Activated CD4-positive, alpha-beta memory T cell treated with anti-CD3 and anti-CD28 coated beads for 36 hours (primary cell): ENCODE measurements at regions of chr6 and their contacts with region 1.

Region 1: DNA sequence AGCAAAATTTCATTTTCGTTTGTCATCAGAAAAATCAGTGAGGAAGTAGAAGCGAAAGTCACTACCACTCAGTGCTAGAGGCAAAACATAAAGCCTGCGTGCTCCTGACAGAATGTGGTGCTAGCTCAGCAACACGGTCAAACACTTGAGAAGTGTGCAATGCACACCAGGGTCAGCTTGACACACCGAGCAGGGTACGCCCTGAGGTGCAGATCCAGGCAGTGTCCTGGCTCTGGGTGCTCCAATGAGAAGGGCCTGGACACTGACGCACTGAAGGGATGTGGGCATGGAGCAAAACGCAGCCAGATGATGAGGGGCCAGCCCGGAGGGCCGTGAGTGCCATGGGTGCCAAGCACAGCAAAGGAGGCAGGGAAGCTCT is 5.9 kb downstream of the RNASET2 start:
- DNase-seq: peak; percentile 59
- H3K4me3 Mint-ChIP-seq: peak overlapping the region; percentile 79
- H3K27ac Mint-ChIP-seq: peak overlapping the region; percentile 99
- H3K4me1 Mint-ChIP-seq: peaks cover 63% of the 10 kb centered on the region
- H3K27me3 Mint-ChIP-seq: no peaks in the 10 kb centered on the region

Region 2: GRCh38 chr6:166775180-166776081 is 175.0 kb before region 1 on chr6:
- CTCF ChIA-PET with region 1: interaction called, 31 read pairs
- POLR2A ChIA-PET with region 1: no interaction called
- intact Hi-C with region 1: no loop called
- DNase-seq: peak; percentile 69
- H3K4me3 Mint-ChIP-seq: no peak overlapping the region
- H3K27ac Mint-ChIP-seq: no peak overlapping the region
- H3K4me1 Mint-ChIP-seq: no peaks in the 10 kb centered on the region
- H3K27me3 Mint-ChIP-seq: no peaks in the 10 kb centered on the region

Region 3: GRCh38 chr6:166830185-166830890 is 120.1 kb before region 1 on chr6:
- CTCF ChIA-PET with region 1: interaction called, 9 read pairs
- POLR2A ChIA-PET with region 1: interaction called, 4 read pairs
- intact Hi-C with region 1: loop called (anchors 1 kb)
- DNase-seq: peak; percentile 68
- H3K4me3 Mint-ChIP-seq: no peak overlapping the region
- H3K27ac Mint-ChIP-seq: peak overlapping the region; percentile 58
- H3K4me1 Mint-ChIP-seq: peaks cover 17% of the 10 kb centered on the region
- H3K27me3 Mint-ChIP-seq: no peaks in the 10 kb centered on the region

Region 4: DNA sequence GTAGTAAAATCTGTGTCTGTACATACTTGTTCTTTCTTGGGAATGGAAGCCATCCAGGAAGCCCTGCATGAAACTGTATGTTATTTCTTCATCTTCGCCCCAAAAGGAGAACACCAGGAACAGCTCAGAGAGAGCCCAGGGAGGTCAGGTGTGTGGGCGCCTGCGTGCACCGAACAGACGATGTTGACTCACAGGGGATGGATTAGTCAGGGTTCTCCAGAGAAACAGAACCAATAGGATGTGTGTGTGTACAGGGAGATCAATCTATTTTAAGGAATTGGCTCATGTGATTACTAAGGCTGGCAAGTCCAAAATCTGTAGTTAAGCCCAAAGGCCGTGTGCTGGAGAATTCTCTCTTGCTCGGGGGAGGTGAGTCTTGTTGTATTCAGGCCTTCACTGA is 39.8 kb before region 1 on chr6:
- CTCF ChIA-PET with region 1: no interaction called
- POLR2A ChIA-PET with region 1: interaction called, 4 read pairs
- intact Hi-C with region 1: loop called (anchors 2 kb)
- DNase-seq: peak; percentile 58
- H3K4me3 Mint-ChIP-seq: no peak overlapping the region
- H3K27ac Mint-ChIP-seq: no peak overlapping the region
- H3K4me1 Mint-ChIP-seq: peaks cover 32% of the 10 kb centered on the region
- H3K27me3 Mint-ChIP-seq: no peaks in the 10 kb centered on the region

Region 5: GRCh38 chr6:166999145-166999883 is 48.9 kb after region 1 on chr6 and contains the start of gene CEP43:
- CTCF ChIA-PET with region 1: interaction called, 6 read pairs
- POLR2A ChIA-PET with region 1: interaction called, 18 read pairs
- intact Hi-C with region 1: loop called (anchors 1 kb)
- DNase-seq: peak; percentile 90
- H3K4me3 Mint-ChIP-seq: peak within 1 kb of the TSS; percentile 85
- H3K27ac Mint-ChIP-seq: peak within 1 kb of the TSS; percentile 85
- H3K4me1 Mint-ChIP-seq: peaks cover 28% of the 10 kb centered on the region
- H3K27me3 Mint-ChIP-seq: no peaks in the 10 kb centered on the region
- total RNA-seq, gene CEP43: 19.5 to 21.3 TPM

Region 6: GRCh38 chr6:167113935-167114910 is 163.8 kb after region 1 on chr6:
- CTCF ChIA-PET with region 1: no interaction called
- POLR2A ChIA-PET with region 1: no interaction called
- intact Hi-C with region 1: loop called (anchors 2 kb)
- DNase-seq: peak; percentile 90
- H3K4me3 Mint-ChIP-seq: peak overlapping the region; percentile 76
- H3K27ac Mint-ChIP-seq: peak overlapping the region; percentile 94
- H3K4me1 Mint-ChIP-seq: peaks cover 83% of the 10 kb centered on the region
- H3K27me3 Mint-ChIP-seq: no peaks in the 10 kb centered on the region

Region 7: DNA sequence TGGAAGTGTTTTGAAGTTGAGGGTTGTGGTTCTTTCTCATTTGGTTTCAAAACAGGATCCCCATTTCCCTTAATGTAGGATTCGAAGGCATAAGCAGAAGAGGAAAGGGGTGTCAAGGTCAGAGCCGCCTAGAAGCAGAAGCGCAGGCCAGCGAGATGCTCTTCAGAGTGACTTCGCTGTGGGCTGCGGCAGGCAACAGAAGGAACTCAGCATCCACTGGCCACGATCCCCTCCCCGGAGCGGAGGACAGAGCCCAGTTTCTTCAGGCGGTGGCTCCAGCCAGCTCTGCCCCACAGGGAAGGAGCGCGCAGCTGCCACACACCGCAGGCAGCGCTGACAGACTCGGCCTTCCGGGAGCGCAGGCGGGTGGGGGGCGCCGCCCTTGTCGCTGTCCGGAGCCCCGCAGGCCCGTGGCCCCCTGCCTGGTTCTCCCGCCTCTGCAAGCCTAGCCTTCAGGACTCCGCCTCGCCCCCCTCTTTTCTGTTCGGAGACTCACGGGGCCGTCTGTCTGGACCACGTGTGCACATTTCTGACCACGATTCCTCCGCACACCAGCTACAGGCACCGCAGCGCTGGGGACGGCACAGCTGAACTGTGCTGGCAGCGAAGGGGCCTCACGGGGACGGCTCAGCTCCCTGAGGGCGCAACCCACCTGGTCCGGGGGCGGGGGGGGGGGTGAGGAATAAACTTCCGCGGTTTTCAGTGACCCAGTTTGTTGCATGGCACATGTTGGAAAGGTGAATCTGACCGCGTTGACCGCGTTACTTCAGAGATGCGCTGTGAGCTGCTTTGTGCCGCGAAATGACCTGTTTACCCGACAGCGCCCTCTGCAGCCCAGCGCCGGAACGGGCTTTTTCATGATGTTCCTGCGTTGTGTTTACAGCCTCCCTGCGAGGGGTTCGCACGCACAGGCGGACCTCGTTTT is 400.6 kb after region 1 on chr6:
- CTCF ChIA-PET with region 1: interaction called, 3 read pairs
- POLR2A ChIA-PET with region 1: no interaction called
- intact Hi-C with region 1: loop called (anchors 5 kb)
- DNase-seq: peak; percentile 96
- H3K4me3 Mint-ChIP-seq: peak overlapping the region; percentile 80
- H3K27ac Mint-ChIP-seq: peak overlapping the region; percentile 95
- H3K4me1 Mint-ChIP-seq: peaks cover 23% of the 10 kb centered on the region
- H3K27me3 Mint-ChIP-seq: peaks cover 33% of the 10 kb centered on the region